HEK293 (cell line): ENCODE measurements at regions of chr19 and their contacts with region 1.

Region 1: DNA sequence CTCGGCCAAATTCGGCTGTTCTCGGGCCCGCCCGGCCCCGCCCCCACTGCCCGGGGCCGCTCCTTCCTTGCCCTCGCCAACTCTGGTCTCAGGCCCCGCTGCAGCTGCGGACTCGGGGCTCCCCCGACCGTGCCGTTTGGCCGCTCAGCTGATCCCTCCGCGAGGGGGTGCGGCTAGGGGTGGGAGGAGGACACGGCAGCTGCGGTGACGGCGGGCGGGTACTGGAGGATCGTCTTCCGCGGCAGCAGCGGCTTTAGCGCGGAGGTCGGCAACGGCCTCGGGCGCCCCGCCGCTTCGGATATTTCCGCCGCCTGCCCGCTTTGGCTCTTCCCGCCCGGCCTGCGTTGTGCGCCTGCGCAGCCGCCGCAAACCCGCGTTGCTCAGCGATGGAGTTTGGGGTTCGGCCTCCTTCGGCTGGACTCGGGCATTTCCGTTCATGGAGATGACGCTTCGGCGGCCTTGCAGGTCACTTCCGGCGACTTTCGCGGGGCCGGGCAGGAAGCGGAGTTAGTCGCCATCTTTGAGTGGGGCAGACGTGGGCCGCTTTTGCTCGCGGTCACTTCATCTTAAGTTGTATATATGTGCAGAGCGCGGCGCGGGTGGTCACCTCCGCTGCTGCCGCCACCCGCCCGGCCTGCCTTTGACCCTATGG is 338 bp upstream of the UBE2M start:
- H3K4me3 ChIP-seq: peak overlapping the region; percentile 89
- H3K27ac ChIP-seq: peak overlapping the region; percentile 99
- H3K4me1 ChIP-seq: peaks cover 17% of the 10 kb centered on the region
- CTCF ChIP-seq: no peak

Region 2: GRCh38 chr19:58439576-58440554 is 118.9 kb before region 1 on chr19 and contains the start of gene ZNF132:
- CTCF ChIA-PET with region 1: no interaction called
- POLR2A ChIA-PET with region 1: no interaction called
- H3K4me3 ChIP-seq: peak within 1 kb of the TSS; percentile 5; the same call in 1 of the 2 replicates
- H3K27ac ChIP-seq: no peak within 1 kb of the TSS
- H3K4me1 ChIP-seq: no peaks in the 10 kb centered on the region
- CTCF ChIP-seq: no peak

Region 3: GRCh38 chr19:58572818-58573657 is 14.3 kb after region 1 on chr19 and contains the start of gene MZF1:
- CTCF ChIA-PET with region 1: interaction called, 4 read pairs
- POLR2A ChIA-PET with region 1: interaction called, 28 read pairs
- H3K4me3 ChIP-seq: peak within 1 kb of the TSS; percentile 67
- H3K27ac ChIP-seq: peak within 1 kb of the TSS; percentile 77
- H3K4me1 ChIP-seq: peaks cover 8% of the 10 kb centered on the region
- CTCF ChIP-seq: peak; percentile 97

Region 4: DNA sequence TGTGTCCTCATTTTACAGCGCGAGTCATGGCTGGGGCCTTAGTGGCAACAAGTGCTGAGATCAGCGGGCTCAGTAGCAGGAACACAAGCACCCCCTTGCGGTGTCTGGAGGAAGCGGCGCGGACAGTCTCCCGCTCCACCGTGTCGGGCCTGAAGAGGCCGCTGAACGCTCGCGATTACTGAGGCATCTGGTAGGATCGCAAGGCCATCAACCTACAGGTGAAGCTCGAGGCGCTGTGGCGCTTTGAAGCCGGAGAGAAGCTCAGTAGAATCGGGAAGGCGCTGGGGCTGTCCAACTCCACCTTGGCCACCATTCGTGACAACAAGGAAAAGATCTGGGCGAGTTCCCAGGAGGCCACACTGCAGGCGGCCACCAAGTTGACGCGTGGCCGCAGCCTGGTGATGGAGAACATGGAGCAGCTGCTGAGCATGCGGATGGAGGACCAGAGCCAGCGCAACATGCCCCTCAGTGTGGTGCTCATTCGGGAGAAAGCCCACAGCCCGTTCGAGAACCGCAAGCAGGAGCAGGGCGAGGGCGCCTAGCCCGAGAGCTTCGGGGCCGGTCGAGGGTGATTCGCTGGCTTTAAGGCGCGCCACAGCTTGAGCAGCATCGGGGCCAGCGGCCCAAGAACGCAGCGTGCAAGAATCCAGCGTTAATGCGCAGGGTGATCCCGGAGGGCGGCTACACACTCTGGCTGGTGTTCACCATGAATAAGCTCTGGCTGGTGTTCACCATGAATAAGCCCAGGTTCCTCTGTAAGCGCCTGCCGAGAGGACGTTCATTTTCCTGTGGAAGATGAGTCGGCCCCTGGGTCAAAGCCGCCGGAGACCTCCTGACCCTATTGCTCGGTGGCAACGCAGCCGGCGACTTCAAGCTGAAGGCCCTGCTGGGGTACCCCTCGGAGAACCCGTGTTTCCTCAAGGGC is 22.7 kb after region 1 on chr19:
- CTCF ChIA-PET with region 1: interaction called, 10 read pairs
- POLR2A ChIA-PET with region 1: interaction called, 22 read pairs
- H3K4me3 ChIP-seq: no peak overlapping the region
- H3K27ac ChIP-seq: no peak overlapping the region
- H3K4me1 ChIP-seq: no peaks in the 10 kb centered on the region
- CTCF ChIP-seq: peak; percentile 63